ENCODE measurements at regions of chr18 and their contacts with region 1.

Region 1: DNA sequence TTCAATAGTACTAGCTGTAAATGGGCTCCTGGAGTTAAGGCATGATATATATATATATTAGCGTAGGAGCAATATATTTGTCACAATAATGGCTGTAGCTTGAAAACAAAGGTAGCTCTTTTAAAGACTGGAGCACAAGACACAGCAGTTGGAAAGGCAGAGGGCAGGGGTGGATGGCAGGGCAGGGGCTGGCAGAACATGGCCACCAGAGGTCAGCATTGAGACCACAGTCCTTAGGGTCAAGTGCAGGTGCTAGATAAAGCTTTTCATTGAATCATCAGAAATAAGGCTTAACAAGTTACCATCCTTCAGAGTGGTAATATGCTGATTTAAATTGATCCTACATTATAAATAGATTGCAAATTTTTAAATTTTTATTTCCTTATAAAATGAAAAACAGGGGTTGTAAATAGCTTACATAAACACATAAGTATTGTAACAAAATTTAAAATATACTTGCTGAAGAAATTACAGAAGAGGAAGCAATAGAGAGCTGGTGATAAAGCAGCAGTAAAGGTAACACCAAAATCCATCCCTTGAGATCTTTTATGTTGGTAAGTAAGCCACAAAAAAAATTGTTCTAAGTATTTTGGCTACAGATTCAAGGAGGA is 161.2 kb upstream of the PIEZO2 start:
- DNase-seq: peak; percentile 44
- CTCF ChIP-seq: peak; percentile 81

Region 2: GRCh38 chr18:11366410-11366809 is 55.8 kb after region 1 on chr18:
- in situ Hi-C with region 1: no loop called
- DNase-seq: no peak
- CTCF ChIP-seq: no peak

Region 3: GRCh38 chr18:11518788-11519685 is 208.5 kb after region 1 on chr18:
- in situ Hi-C with region 1: loop called (anchors 25 kb)
- DNase-seq: peak; percentile 79
- CTCF ChIP-seq: peak; percentile 94